Activated naive CD4-positive, alpha-beta T cell treated with anti-CD3 and anti-CD28 coated beads for 36 hours (primary cell): ENCODE measurements at regions of chr15 and their contacts with region 1.

Region 1: DNA sequence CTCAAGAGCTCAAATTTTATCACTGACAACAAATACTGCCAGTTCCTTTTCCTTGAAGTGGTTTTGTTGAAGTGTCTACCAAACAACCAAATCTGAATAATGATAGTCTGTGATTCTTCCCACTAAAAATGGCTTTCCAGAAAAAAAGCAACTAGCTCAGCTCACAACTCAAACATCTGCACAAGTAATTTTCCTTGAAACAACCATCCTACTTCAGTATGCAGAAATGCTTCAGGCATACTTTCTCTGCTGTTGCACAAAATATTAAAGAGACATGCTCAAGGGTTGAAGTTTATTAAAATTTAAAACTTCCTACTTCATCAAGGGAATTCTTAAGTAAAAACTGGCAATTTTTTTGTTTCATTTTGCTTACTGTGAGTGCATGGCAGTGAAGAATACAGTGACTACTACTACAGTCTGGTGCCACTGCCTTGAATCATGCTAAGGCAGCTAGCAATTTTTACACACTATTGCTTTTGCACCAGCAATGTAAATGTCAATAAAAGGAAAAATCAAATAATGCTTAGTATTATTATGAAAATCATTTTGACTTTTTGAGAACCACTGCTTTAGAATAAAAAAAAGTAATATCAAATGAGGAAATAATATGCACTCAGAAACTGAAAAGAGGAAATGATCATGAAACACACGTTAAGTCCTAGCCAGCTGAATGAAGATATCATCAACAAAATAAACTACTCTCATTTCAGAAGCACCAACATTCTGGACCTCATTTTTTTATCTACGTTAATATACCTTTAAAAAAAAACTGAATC is 33.6 kb downstream of the VPS13C start:
- DNase-seq: no peak
- H3K4me3 Mint-ChIP-seq: no peak overlapping the region
- H3K27ac Mint-ChIP-seq: no peak overlapping the region
- H3K4me1 Mint-ChIP-seq: peaks cover 2% of the 10 kb centered on the region
- H3K27me3 Mint-ChIP-seq: no peaks in the 10 kb centered on the region

Region 2: DNA sequence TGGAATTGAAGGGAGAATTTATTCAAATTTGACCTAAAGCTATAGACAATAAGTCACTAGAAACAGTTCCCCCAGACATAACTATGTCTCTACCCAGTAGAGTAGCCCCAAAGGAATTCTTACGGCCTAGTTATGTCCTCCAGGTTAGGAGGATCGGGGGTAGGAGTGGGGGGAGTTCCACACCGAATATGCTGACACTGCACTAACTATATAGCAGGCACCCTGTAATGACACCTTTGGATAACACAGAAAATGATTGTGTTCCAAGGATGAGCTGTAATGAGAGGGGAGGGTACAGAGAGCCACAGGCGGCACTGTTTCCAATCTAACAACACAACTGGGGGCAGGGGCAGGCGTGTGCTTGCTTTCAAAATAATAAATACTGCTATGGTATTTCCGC is 421.3 kb before region 1 on chr15:
- CTCF ChIA-PET with region 1: no interaction called
- intact Hi-C with region 1: no loop called
- DNase-seq: no peak
- H3K4me3 Mint-ChIP-seq: no peak overlapping the region
- H3K27ac Mint-ChIP-seq: no peak overlapping the region
- H3K4me1 Mint-ChIP-seq: no peaks in the 10 kb centered on the region
- H3K27me3 Mint-ChIP-seq: peaks cover 18% of the 10 kb centered on the region

Region 3: GRCh38 chr15:61974759-61975158 is 51.9 kb before region 1 on chr15:
- CTCF ChIA-PET with region 1: no interaction called
- intact Hi-C with region 1: loop called (anchors 5 kb)
- DNase-seq: no peak
- H3K4me3 Mint-ChIP-seq: no peak overlapping the region
- H3K27ac Mint-ChIP-seq: no peak overlapping the region
- H3K4me1 Mint-ChIP-seq: peaks cover 8% of the 10 kb centered on the region
- H3K27me3 Mint-ChIP-seq: no peaks in the 10 kb centered on the region